ENCODE measurements at regions of chr18 and their contacts with region 1.

Region 1: DNA sequence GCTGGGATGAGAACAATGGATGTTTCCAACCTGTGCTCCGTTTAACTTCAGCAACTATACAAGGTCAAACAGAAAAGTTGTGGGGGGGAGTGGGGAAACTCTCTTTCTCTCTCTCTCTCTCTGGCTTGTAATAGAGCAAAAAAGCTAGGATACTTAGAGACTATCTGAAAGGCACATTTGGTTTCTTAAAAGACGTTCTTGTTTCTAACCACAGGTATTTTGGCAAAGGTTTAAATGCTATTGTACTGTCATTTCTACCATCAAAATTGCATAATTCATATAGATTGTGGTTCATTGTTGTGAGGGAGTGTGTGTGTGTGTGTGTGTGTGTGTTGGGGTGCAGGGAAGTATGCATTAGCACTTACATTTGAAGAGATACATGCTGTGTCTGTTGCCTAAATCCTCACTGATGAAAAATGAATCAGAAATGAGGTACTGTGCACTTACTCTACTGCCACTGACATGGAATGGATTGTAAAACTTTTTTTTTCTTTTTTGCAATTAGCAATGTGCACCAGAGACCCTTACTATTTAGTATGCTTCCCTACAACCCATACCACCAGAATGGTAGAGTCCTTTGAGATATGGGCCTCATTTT is 841.0 kb upstream of the PIK3C3 start:
- DNase-seq: no peak
- H3K4me3 ChIP-seq: no peak overlapping the region
- H3K27ac ChIP-seq: no peak overlapping the region
- H3K4me1 ChIP-seq: no peaks in the 10 kb centered on the region
- H3K27me3 ChIP-seq: no peaks in the 10 kb centered on the region
- CTCF ChIP-seq: no peak

Region 2: DNA sequence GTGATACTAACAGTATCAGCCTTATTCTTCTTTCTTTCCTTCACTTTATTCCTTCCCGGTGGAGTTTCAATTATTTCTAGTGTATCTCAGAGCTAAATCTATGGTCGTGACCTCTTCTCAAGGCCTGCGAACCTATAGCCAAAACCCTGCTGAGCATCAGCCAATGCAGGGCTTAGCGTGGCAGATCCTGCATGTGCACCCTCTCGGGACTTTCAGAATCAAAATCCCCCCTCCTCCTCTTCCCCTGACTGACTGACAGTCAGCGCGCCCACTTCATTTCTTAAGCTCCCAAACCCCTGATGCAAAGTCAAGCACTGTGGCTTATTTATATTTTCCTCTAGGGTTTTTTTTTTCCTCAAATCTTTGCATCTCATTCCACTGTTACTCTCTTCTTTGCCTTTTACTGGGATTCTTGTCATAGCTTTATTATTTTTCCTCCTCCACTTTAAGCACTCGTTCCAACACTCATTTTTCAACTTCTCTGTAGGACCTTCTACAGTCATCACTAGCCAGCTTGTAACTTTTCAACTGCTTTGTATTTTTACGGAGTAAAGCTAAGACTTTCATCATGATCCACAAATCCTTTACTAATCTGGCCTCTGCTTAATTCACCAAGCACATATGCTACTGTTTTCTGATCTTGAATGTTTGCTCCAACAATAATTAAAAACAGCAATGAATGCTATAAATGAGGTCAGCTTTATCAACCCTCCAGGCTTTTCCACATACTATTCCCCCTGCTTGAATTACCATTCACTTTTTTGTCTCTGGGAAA is 55.4 kb before region 1 on chr18:
- intact Hi-C with region 1: loop called (anchors 10 kb)
- DNase-seq: peak in 1 of 5 donors; percentile 44
- H3K4me3 ChIP-seq: no peak overlapping the region
- H3K27ac ChIP-seq: no peak overlapping the region
- H3K4me1 ChIP-seq: no peaks in the 10 kb centered on the region
- H3K27me3 ChIP-seq: no peaks in the 10 kb centered on the region
- CTCF ChIP-seq: no peak

Measured in kidney (tissue), 22 donors.